Mammary epithelial cell (primary cell): ENCODE measurements at regions of chr10 and their contacts with region 1.

Region 1: GRCh38 chr10:59906417-59907202 is at the start of gene CCDC6:
- DNase-seq: peak; percentile 92
- H3K4me3 ChIP-seq: peak within 1 kb of the TSS; percentile 86 to 97 (median 97)
- H3K27ac ChIP-seq: peak within 1 kb of the TSS; percentile 98
- H3K4me1 ChIP-seq: peaks cover 48% of the 10 kb centered on the region
- H3K27me3 ChIP-seq: no peaks in the 10 kb centered on the region
- CTCF ChIP-seq: peak; percentile 49 to 76
- total RNA-seq, gene CCDC6: 52.4 to 76.0 TPM

Region 2: GRCh38 chr10:59817773-59818172 is 88.8 kb before region 1 on chr10:
- CTCF ChIA-PET with region 1: no interaction called
- dilution Hi-C with region 1: no loop called
- in situ Hi-C with region 1: no loop called
- intact Hi-C with region 1: no loop called
- DNase-seq: no peak
- H3K4me3 ChIP-seq: no peak overlapping the region
- H3K27ac ChIP-seq: no peak overlapping the region
- H3K4me1 ChIP-seq: peaks cover 5% of the 10 kb centered on the region
- H3K27me3 ChIP-seq: no peaks in the 10 kb centered on the region
- CTCF ChIP-seq: no peak

Region 3: DNA sequence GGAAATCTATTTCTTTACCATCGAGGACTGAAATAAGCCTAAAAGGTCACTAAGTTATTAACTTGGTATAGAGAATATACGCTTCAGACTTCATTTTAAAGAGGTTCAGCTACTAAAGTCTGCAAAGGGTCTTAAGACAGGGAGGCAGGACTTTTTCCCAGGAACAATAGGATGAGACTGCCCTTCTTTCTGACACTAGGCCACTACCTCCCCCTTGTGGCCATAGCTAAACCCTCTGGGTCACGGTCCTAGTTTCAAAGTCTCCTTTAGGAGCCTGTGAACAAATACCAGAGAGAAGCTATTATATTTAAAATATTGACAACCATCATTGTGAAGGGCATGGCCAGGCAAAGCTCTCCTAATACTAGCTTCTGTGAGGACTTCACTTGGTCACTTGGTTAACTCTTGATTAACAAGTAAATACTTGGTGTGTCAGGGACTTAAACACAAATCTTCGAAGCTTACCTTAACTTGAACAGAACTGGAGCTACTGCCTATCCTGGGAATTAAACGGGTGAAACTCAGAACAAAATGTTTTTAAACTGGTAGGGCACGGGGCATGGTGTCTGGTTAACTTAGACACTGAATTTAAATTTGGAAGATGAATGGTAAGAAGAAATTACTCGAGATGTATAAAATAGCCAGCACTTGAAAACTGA is 75.9 kb before region 1 on chr10:
- CTCF ChIA-PET with region 1: interaction called, 4 read pairs
- dilution Hi-C with region 1: no loop called
- in situ Hi-C with region 1: no loop called
- intact Hi-C with region 1: loop called (anchors 1 kb)
- DNase-seq: peak; percentile 12
- H3K4me3 ChIP-seq: no peak overlapping the region
- H3K27ac ChIP-seq: no peak overlapping the region
- H3K4me1 ChIP-seq: no peaks in the 10 kb centered on the region
- H3K27me3 ChIP-seq: no peaks in the 10 kb centered on the region
- CTCF ChIP-seq: peak; percentile 82 to 85

Region 4: DNA sequence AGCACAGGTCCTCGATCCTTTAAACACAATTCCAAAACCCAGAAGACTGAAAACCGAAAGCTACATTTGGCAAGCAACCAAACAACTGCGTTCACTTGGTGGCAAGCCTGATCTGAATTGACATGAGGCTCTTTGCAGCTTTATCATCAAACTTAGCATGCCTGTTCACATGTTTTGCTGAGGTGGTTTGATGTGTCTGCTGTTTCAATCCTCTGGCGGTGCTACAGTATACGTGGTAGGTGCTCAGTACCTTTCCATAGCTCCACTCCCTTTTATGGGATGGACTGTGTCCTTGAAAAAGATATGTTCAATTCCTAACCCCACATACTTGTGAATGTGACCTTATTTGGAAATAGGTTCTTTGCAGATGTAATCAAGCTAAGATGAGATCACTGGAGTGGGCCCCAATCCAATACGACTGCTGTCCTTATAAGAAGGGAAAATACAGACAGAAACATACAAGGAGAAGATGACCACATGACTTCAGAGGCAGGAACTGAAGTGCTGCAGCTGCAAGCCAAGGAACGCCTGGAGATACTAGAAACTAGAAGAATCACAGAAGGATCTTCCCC is 33.6 kb before region 1 on chr10:
- CTCF ChIA-PET with region 1: no interaction called
- dilution Hi-C with region 1: no loop called
- in situ Hi-C with region 1: loop called in 1 of 2 experiments (anchors 5 kb)
- intact Hi-C with region 1: loop called (anchors 2 kb)
- DNase-seq: peak; percentile 80
- H3K4me3 ChIP-seq: peak overlapping the region; percentile 6 to 33 (median 12)
- H3K27ac ChIP-seq: peak overlapping the region; percentile 34
- H3K4me1 ChIP-seq: peaks cover 32% of the 10 kb centered on the region
- H3K27me3 ChIP-seq: no peaks in the 10 kb centered on the region
- CTCF ChIP-seq: no peak

Region 5: GRCh38 chr10:59984415-59984814 is 77.8 kb after region 1 on chr10:
- CTCF ChIA-PET with region 1: interaction called, 16 read pairs
- dilution Hi-C with region 1: no loop called
- in situ Hi-C with region 1: no loop called
- intact Hi-C with region 1: no loop called
- DNase-seq: no peak
- H3K4me3 ChIP-seq: no peak overlapping the region
- H3K27ac ChIP-seq: no peak overlapping the region
- H3K4me1 ChIP-seq: peaks cover 9% of the 10 kb centered on the region
- H3K27me3 ChIP-seq: no peaks in the 10 kb centered on the region
- CTCF ChIP-seq: no peak